ENCODE measurements at regions of chr17 and their contacts with region 1.

Region 1: DNA sequence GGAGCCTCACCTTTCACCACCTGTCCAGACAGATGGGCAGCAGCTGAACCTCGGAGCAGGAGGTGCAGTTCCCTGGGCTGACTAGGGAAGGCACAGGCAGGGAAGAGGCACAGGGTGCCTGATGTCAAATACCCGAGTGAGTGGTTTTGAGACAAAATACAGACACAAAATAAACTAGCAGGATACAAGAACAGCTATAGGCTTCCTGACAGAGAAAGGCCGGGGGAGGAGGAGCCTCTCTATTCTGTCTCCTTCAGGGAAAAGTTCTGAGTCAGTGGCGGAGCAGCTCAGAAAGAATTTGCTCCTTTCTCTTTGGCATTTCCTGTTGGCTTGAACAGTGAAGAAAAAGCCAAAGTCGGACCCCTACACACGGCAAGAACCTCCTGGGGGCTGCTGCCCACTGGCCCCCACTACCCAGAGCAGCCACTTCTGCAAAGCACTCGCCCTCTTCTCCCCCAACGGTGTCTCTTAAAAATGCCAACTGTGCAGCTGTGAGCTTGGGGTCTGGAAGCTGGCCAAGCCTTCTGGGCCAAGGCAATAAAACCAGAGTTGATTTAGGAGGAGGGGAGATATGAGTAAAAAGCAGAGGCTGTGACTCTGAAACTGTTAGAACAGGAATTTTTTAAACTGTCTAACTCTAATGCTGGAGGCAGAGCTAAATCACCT is 14.4 kb upstream of the FAAP100 start:
- H3K4me3 ChIP-seq: no peak overlapping the region
- H3K27ac ChIP-seq: peak overlapping the region; percentile 88
- H3K4me1 ChIP-seq: peaks cover 23% of the 10 kb centered on the region
- CTCF ChIP-seq: no peak

Region 2: DNA sequence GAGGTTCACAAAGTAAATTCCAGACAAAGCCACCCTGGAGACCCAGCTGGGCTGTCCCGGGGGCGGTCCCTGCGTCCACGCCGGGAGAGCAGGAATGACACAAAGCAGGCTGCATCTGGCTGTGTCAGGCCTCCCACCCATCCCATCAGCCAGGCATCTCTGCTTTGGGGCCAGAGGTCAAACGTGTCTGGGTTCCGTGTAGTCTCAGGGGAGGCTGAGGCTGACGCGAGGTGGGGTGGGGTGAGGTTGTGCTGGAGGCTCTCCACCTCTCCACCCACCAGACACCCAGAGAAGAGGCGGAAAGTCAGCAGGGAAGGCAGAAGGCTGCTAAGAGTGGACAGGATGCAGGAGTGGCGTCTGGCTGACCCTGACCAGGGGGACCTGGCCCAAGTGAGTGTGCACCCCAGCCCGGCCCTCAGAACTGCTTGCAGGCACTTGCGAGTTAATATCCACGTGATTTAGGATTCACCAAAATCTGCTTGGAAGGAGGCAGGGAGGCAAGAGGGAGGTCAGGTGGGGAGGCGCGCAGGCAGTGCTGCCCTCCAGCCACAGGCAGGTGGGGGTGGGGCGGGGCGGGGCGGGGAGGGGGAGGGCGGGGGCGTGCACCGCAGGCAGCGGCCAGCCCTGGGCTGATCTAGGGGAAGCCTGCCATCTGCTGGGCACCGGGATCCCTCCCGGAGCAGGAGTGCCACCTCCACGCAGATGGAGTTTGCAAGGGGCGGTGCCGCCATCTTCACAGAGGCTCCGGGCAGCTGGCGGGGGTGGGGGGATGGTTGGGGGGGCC is 1575.3 kb before region 1 on chr17:
- CTCF ChIA-PET with region 1: no interaction called
- POLR2A ChIA-PET with region 1: interaction called, 10 read pairs
- H3K4me3 ChIP-seq: no peak overlapping the region
- H3K27ac ChIP-seq: peak overlapping the region; percentile 85; the same call in 1 of the 2 replicates
- H3K4me1 ChIP-seq: peaks cover 36% of the 10 kb centered on the region
- CTCF ChIP-seq: no peak

Region 3: GRCh38 chr17:81543339-81543675 is 23.3 kb before region 1 on chr17:
- CTCF ChIA-PET with region 1: no interaction called
- POLR2A ChIA-PET with region 1: interaction called, 10 read pairs
- H3K4me3 ChIP-seq: no peak overlapping the region
- H3K27ac ChIP-seq: no peak overlapping the region
- H3K4me1 ChIP-seq: no peaks in the 10 kb centered on the region
- CTCF ChIP-seq: no peak

Region 4: DNA sequence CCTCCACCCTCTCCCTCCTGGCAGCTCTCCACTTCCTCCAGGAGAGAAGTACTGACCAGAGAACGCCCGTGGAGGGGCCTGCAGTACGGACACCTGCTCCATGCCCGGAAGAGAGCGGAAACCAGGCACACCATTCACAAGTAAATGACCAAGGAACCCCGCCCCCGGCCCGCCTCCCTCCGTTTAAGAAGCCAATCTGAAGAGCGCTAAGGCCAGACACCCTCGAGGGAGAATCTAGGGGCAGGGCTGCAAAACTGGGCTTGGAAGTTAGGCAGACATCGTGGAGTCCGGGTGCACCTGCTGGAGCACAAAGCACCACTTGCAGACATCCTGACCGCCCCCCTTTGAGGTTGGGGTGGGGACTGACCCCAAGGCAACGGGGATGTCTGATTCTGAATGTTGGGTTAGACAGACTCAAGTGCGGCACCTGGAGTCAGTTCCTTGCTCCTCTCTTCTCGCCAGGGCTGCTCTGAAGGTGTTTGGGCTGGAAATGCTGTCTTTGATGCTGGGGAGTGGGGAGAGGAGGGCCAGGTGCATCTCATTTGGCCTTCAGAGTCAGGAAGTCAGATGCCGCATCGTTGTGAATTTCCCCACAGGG is 13.5 kb before region 1 on chr17:
- CTCF ChIA-PET with region 1: interaction called, 5 read pairs
- POLR2A ChIA-PET with region 1: interaction called, 16 read pairs
- H3K4me3 ChIP-seq: peak overlapping the region; percentile 86
- H3K27ac ChIP-seq: peak overlapping the region; percentile 74
- H3K4me1 ChIP-seq: peaks cover 12% of the 10 kb centered on the region
- CTCF ChIP-seq: peak; percentile 46; the same call in 1 of the 2 replicates

Region 5: GRCh38 chr17:81576621-81577277 is 10.2 kb after region 1 on chr17:
- CTCF ChIA-PET with region 1: interaction called, 12 read pairs
- POLR2A ChIA-PET with region 1: interaction called, 7 read pairs
- H3K4me3 ChIP-seq: no peak overlapping the region
- H3K27ac ChIP-seq: peak overlapping the region; percentile 59
- H3K4me1 ChIP-seq: peaks cover 16% of the 10 kb centered on the region
- CTCF ChIP-seq: no peak

Region 6: DNA sequence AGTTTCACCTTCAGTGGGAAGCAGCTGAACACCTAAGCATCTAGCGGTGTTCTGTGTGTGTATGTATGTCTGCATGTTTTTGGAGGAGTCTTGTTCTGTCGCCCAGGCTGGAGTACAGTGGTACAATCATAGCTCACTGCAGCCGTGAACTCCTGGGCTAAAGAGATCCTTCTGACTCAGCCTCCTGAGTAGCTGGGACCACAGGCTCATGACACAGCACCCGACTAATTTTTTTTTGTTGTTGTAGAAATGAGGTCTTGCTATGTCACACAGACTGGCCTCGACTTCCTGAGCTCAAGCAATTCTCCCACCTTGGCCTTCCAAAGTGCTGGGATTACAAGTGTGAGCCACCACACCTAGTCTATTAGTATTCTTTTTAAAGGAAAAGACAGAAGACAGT is 15.7 kb after region 1 on chr17:
- CTCF ChIA-PET with region 1: interaction called, 12 read pairs
- POLR2A ChIA-PET with region 1: interaction called, 11 read pairs
- H3K4me3 ChIP-seq: no peak overlapping the region
- H3K27ac ChIP-seq: no peak overlapping the region
- H3K4me1 ChIP-seq: peaks cover 16% of the 10 kb centered on the region
- CTCF ChIP-seq: no peak

Measured in HEK293 (cell line).